WTC11 (cell line): ENCODE measurements at regions of chr2 and their contacts with region 1.

Region 1: DNA sequence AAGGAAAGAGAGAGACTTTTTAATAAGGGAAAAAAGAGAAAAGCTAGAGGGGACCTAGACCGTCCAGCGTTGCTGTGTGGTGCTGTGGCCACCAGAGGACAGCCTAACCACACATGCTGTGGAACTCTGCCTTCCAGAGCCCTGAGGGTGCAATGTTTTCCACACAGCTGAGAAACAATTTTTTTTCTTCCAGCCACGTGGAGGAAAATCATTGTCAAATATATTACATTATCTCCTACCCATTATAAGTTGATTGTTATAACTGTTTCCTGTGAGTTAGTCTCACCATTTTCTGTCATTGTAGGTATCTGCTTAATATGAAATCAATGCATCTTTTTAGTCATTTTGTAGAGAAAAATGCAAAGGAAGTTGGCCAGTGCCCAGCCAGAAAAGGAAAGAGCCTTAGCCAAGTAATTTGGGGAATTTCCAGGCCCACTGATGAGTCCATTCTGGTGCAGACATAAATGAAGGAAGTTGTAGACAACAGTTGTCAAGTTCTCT is 5.9 kb upstream of the MRPL19 start:
- DNase-seq: peak; percentile 68
- ATAC-seq: peak; percentile 98
- H3K4me3 Mint-ChIP-seq: no peak overlapping the region
- H3K27ac Mint-ChIP-seq: no peak overlapping the region
- H3K4me1 Mint-ChIP-seq: peaks cover 9% of the 10 kb centered on the region
- H3K27me3 Mint-ChIP-seq: no peaks in the 10 kb centered on the region; the same call in 1 of the 2 replicates
- CTCF ChIP-seq: peak; percentile 81

Region 2: DNA sequence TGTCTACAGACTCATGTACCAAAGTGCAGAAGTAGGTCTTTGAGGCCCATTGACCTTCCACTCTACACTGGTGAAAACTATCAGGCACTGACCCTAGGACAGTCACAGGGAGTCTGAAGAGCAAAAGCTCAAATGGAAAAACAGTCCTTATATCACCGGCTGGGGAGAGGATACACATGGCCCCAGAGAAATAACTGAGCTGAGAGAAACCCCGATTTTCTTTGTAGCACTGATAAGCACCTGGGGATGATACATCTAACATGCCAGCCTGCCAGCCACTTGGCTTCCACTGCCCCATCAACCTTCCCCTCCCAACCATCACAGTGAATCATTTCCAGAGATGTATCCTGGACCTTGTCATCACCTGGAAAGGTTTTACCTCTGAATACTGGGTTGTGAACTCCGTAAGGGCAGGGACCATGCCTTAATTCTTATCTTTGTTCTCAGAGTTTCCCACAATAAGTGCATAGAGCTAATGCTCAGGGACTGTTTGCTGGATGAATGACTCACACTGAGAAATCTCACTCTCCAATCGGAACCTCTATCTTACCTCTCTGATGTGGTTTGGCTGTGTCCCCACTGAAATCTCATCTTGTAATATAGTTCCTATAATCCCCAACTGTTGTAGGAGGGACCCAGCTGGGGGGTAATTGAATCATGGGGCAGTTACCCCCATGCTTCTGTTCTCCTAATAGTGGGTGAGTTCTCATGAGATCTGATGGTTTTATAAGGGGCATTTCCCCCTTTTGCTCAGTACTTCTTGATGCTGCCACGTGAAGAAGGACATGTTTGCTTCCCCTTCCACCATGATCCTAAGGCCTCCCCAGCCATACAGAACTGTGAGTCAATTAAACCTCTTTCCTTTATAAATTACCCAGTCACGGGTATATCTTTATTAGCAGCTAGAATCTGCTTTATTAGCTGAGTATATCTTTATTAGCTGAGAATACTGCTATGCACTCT is 117.1 kb before region 1 on chr2:
- CTCF ChIA-PET with region 1: no interaction called
- POLR2A ChIA-PET with region 1: no interaction called
- DNase-seq: no peak
- ATAC-seq: no peak
- H3K4me3 Mint-ChIP-seq: no peak overlapping the region
- H3K27ac Mint-ChIP-seq: no peak overlapping the region
- H3K4me1 Mint-ChIP-seq: peaks cover 12% of the 10 kb centered on the region
- H3K27me3 Mint-ChIP-seq: no peaks in the 10 kb centered on the region
- CTCF ChIP-seq: no peak

Region 3: DNA sequence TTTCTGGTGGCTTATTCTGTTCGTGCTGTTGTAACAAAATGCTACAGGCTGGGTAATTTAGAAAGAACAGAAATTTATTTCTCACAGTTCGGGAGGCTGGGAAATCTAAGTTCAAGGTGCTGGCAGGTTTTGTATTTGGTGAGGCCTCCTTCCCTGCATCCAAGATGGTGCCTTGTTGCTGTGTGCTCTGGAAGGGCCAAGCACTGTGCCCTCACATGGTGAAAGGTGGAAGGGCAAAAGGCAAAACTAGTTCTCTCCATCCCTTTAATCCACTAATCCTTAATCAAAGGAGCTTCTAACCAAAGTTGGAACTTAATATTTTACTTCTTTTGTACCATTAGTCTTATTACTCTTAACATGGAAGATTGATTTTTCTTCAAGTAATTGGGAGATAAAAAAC is 13.3 kb after region 1 on chr2:
- CTCF ChIA-PET with region 1: interaction called, 12 read pairs
- POLR2A ChIA-PET with region 1: no interaction called
- DNase-seq: no peak
- ATAC-seq: peak; percentile 72; the same call in 1 of the 2 replicates
- H3K4me3 Mint-ChIP-seq: no peak overlapping the region
- H3K27ac Mint-ChIP-seq: no peak overlapping the region
- H3K4me1 Mint-ChIP-seq: no peaks in the 10 kb centered on the region
- H3K27me3 Mint-ChIP-seq: no peaks in the 10 kb centered on the region
- CTCF ChIP-seq: no peak

Region 4: GRCh38 chr2:75667884-75668283 is 27.2 kb after region 1 on chr2:
- CTCF ChIA-PET with region 1: interaction called, 20 read pairs
- POLR2A ChIA-PET with region 1: no interaction called
- DNase-seq: no peak
- ATAC-seq: no peak
- H3K4me3 Mint-ChIP-seq: no peak overlapping the region
- H3K27ac Mint-ChIP-seq: no peak overlapping the region
- H3K4me1 Mint-ChIP-seq: peaks cover 17% of the 10 kb centered on the region
- H3K27me3 Mint-ChIP-seq: no peaks in the 10 kb centered on the region
- CTCF ChIP-seq: no peak

Region 5: GRCh38 chr2:75676464-75676863 is 35.8 kb after region 1 on chr2:
- CTCF ChIA-PET with region 1: interaction called, 33 read pairs
- POLR2A ChIA-PET with region 1: no interaction called
- DNase-seq: no peak
- ATAC-seq: no peak
- H3K4me3 Mint-ChIP-seq: no peak overlapping the region
- H3K27ac Mint-ChIP-seq: no peak overlapping the region
- H3K4me1 Mint-ChIP-seq: no peaks in the 10 kb centered on the region
- H3K27me3 Mint-ChIP-seq: no peaks in the 10 kb centered on the region
- CTCF ChIP-seq: no peak

Region 6: DNA sequence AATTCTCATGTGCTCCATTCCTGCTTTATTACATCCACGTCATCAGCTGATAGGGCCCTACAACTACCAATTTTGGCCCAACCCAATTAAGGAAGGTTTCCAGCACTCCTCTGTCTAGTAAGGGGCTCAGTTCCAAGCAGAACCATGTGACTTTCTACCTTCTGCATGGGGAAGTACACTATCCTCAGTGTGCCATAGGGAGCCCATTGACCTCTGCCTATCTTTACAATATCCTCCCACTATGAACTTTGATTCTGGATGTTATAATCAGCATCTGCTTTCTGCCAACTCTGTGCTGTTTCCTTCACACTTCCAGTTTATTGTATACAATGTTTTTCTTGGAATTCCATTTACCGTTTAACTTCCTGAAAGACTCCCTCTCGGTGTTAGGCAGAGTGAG is 123.9 kb after region 1 on chr2:
- CTCF ChIA-PET with region 1: no interaction called
- POLR2A ChIA-PET with region 1: no interaction called
- DNase-seq: no peak
- ATAC-seq: no peak
- H3K4me3 Mint-ChIP-seq: no peak overlapping the region
- H3K27ac Mint-ChIP-seq: no peak overlapping the region
- H3K4me1 Mint-ChIP-seq: no peaks in the 10 kb centered on the region
- H3K27me3 Mint-ChIP-seq: no peaks in the 10 kb centered on the region
- CTCF ChIP-seq: no peak